A673 (cell line): ENCODE measurements at regions of chr11 and their contacts with region 1.

Region 1: DNA sequence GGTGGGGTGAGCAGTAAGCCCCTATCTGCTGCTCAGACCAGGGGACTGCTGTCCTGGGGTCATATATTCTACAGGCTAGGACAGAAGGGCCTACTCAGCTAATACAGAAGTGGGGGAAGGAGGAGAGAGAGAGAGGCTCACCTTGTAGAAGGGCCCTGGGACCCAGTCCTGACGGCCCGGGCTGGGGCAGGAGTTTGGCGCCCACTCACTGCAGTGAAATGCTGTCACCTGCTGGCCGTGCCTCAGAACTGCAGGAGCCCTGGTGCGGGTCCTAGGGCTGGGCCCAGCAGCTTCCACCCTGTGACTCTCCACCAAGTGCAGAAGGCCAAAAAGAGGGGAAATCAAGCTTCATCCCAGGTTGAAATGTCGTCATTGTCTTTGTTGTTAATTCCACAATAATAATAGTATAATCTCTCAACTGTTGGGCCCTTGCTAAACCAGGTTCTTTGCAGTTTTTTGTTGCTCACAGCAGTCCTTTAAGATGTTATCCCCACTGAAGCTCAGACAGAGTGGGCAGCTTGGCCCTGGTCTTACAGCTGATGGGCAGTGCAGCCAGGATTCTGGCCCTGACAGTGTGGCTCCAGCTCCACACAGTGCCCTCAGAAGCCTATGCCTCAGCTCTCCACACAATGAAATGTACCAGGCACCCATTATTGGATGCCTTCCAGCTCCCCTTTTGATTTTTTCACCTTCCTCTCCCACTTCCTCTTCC is 29.6 kb downstream of the TRIM29 start:
- DNase-seq: peak; percentile 75
- H3K4me3 ChIP-seq: no peak overlapping the region
- H3K27ac ChIP-seq: no peak overlapping the region
- H3K4me1 ChIP-seq: no peaks in the 10 kb centered on the region
- H3K27me3 ChIP-seq: peaks cover 6% of the 10 kb centered on the region
- CTCF ChIP-seq: peak; percentile 99

Region 2: GRCh38 chr11:119356349-119357031 is 751.8 kb before region 1 on chr11:
- CTCF ChIA-PET with region 1: no interaction called
- POLR2A ChIA-PET with region 1: no interaction called
- intact Hi-C with region 1: loop called (anchors 10 kb)
- DNase-seq: peak; percentile 93
- H3K4me3 ChIP-seq: peak overlapping the region; percentile 64
- H3K27ac ChIP-seq: peak overlapping the region; percentile 79
- H3K4me1 ChIP-seq: peaks cover 9% of the 10 kb centered on the region
- H3K27me3 ChIP-seq: no peaks in the 10 kb centered on the region
- CTCF ChIP-seq: peak; percentile 95

Region 3: GRCh38 chr11:119666463-119667131 is 441.7 kb before region 1 on chr11:
- CTCF ChIA-PET with region 1: no interaction called
- POLR2A ChIA-PET with region 1: no interaction called
- intact Hi-C with region 1: loop called (anchors 1 kb)
- DNase-seq: peak; percentile 24
- H3K4me3 ChIP-seq: no peak overlapping the region
- H3K27ac ChIP-seq: no peak overlapping the region
- H3K4me1 ChIP-seq: peaks cover 3% of the 10 kb centered on the region
- H3K27me3 ChIP-seq: no peaks in the 10 kb centered on the region
- CTCF ChIP-seq: peak; percentile 88

Region 4: DNA sequence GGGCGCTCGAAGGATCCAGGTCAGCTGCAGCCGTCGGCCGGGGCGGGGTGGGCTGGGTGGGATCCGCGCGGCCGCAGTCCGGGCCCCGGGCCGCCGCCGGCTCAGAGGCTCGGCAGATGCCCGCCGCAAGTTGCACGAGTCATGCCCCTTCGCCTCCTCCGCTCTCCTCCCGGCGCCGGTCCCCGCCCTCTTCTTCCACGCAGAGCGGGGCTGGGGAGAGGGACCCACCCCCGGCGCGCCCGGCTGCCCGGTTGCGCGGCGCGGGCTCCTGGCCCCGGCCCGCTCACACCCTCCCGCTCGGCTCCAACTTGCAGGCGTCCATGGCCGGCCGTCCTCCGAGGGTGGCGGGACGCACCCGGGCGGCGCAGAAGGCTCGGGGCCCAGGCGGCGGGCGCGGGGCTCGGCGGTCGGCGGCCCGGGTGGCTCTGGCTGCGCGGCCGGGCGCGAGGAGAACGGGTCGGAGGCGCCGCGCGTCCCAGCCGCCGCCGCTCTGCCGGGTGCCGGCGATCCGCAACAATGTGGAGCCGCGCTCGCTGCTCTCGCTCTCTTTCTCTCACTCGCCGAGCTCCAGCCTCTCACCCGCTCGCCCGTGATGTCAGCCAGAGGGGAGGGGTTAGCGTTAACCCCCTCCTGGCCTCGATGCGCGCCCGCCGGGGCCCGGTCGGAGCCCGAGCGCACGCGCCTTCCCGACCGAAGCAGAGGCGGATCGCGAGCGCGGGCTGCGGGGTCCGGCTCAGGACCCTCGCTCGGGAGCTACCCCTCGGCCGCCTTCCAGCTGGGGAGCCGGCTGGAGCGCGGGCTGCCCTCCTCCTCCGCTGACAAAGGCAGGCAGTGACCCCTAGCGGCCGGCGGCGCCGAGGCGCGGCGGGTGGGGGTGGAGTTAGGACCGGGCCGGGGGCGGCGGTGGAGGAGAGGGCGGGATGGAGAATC is 379.4 kb before region 1 on chr11 and contains the start of gene NECTIN1:
- CTCF ChIA-PET with region 1: interaction called, 3 read pairs
- POLR2A ChIA-PET with region 1: no interaction called
- intact Hi-C with region 1: loop called (anchors 10 kb)
- DNase-seq: peak; percentile 92
- H3K4me3 ChIP-seq: peak within 1 kb of the TSS; percentile 63
- H3K27ac ChIP-seq: peak within 1 kb of the TSS; percentile 35
- H3K4me1 ChIP-seq: peaks cover 26% of the 10 kb centered on the region
- H3K27me3 ChIP-seq: peaks cover 13% of the 10 kb centered on the region
- CTCF ChIP-seq: peak; percentile 96
- total RNA-seq, gene NECTIN1: 9.8 and 10.1 TPM in 2 replicates

Region 5: GRCh38 chr11:119935349-119935925 is 172.9 kb before region 1 on chr11:
- CTCF ChIA-PET with region 1: no interaction called
- POLR2A ChIA-PET with region 1: no interaction called
- intact Hi-C with region 1: no loop called
- DNase-seq: no peak
- H3K4me3 ChIP-seq: no peak overlapping the region
- H3K27ac ChIP-seq: no peak overlapping the region
- H3K4me1 ChIP-seq: no peaks in the 10 kb centered on the region
- H3K27me3 ChIP-seq: peaks cover 43% of the 10 kb centered on the region
- CTCF ChIP-seq: no peak

Region 6: GRCh38 chr11:120013325-120014270 is 94.7 kb before region 1 on chr11:
- CTCF ChIA-PET with region 1: no interaction called
- POLR2A ChIA-PET with region 1: no interaction called
- intact Hi-C with region 1: loop called (anchors 5 kb)
- DNase-seq: peak; percentile 88
- H3K4me3 ChIP-seq: no peak overlapping the region
- H3K27ac ChIP-seq: no peak overlapping the region
- H3K4me1 ChIP-seq: peaks cover 12% of the 10 kb centered on the region
- H3K27me3 ChIP-seq: peaks cover 21% of the 10 kb centered on the region
- CTCF ChIP-seq: peak; percentile 84